Activated CD4-positive, alpha-beta T cell treated with anti-CD3 and anti-CD28 coated beads for 36 hours (primary cell): ENCODE measurements at regions of chr2 and their contacts with region 1.

Region 1: DNA sequence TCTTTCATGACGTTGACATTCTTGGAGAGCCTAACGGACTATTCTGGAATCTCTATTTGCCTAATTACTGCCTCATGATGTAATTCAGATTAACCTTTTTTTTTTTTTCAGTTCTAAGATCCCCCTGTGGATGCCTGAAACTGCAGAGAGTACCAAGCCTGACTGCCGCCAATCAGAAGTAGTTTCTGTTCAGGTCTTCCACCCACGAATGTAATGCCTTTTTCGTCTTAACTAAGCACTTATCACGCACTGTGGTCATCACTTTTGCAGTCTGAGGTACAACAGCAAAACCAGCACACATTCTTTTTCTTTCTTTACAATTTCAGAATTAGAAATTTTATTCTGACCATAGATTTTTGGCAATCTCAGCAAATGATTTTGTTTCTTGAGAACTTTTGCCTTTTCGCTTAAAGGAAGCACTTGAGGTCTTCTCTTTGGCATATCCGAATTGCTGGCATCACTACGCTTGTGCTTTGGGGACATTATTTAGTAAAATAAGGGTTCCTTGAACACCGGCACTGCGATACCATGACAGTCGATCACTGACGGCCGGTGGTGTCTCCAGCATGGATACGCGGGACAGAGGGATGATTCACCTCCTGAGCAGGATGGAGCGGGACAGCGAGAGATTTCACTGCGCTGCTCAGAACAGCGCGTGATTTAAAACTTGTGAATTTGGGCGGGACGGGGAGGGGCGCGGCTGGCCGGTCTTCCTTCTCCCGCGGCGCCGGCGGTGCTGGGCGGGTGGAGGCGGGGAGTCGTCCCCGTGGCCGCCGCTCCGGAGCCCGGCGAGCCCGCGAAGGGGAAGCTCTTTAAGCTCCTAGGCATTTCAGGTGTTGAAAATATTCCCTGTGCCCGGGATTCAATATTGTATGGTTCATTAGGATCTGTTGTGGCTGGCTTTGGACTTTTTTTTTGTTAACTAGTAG is 32.0 kb upstream of the GPR55 start:
- DNase-seq: peak; percentile 64
- ATAC-seq: peak; percentile 81
- H3K4me3 Mint-ChIP-seq: peak overlapping the region; percentile 79
- H3K27ac Mint-ChIP-seq: peak overlapping the region; percentile 95
- H3K4me1 Mint-ChIP-seq: peaks cover 49% of the 10 kb centered on the region
- H3K27me3 Mint-ChIP-seq: peaks cover 47% of the 10 kb centered on the region

Region 2: DNA sequence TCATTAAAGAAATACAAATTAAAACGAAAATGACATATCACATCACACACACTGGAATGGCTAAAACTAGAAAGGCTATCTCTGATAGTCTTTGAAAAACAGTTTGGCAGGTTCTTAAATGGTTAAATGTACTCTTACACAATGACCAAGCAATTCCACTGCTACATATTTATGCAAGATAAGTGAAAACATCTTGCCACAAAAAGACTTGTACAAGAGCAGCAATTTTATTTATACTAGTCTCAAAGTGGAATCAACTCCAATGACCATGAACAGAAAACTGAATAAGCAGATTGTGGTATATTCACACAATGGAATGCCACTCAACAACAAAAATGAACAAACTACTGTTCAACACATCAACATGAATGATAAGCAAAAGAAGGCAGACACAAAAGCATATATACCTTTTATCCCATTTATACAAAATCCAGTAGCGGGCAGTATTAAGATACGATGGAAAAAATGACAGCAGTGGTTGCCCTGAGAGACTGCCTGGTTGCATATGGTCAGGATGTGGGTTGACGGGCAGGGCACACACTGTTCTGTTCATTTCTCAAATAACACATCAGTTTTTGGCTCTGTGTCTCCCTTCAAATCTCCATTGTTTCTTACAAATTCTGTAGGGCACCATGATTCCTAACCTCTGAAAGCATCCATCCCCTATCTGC is 515.7 kb before region 1 on chr2:
- CTCF ChIA-PET with region 1: no interaction called
- POLR2A ChIA-PET with region 1: no interaction called
- intact Hi-C with region 1: loop called in 1 of 2 experiments (anchors 10 kb)
- DNase-seq: peak; percentile 59
- ATAC-seq: peak; percentile 80
- H3K4me3 Mint-ChIP-seq: peak overlapping the region; percentile 40
- H3K27ac Mint-ChIP-seq: peak overlapping the region; percentile 84
- H3K4me1 Mint-ChIP-seq: peaks cover 60% of the 10 kb centered on the region
- H3K27me3 Mint-ChIP-seq: no peaks in the 10 kb centered on the region

Region 3: DNA sequence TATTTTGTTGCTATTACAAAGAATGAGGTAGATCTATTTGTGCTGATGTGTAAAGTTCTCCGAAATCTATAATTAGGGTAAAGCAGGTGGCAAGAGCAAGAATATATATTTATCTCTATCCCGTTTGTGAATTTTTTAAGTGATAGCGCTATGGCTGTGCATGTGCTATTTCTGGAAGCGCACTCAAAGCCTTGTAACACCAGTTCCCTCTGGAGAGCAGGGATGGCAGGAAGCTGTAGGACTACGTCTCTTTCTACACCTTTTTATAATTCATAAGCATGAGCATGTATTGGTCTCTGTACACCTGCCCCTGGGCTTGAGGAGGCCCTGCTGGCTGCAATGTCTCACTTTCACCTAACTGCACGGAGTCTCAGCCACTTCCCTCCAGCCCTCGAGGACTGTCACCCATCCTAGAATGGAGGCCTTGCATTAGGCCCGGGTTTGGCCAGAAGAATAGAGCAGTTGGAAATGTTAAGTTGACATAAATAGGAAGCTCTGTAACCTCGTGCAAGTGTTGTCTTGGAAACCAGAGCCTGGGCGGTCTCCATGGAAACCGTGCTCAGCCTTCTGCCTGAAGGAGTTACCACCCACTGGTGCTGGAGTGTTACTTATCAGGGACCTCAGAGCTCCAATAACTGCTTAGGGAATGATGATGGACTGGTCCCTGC is 71.5 kb before region 1 on chr2:
- CTCF ChIA-PET with region 1: no interaction called
- POLR2A ChIA-PET with region 1: no interaction called
- intact Hi-C with region 1: no loop called
- DNase-seq: no peak
- ATAC-seq: no peak
- H3K4me3 Mint-ChIP-seq: no peak overlapping the region
- H3K27ac Mint-ChIP-seq: no peak overlapping the region
- H3K4me1 Mint-ChIP-seq: peaks cover 13% of the 10 kb centered on the region
- H3K27me3 Mint-ChIP-seq: peaks cover 2% of the 10 kb centered on the region

Region 4: DNA sequence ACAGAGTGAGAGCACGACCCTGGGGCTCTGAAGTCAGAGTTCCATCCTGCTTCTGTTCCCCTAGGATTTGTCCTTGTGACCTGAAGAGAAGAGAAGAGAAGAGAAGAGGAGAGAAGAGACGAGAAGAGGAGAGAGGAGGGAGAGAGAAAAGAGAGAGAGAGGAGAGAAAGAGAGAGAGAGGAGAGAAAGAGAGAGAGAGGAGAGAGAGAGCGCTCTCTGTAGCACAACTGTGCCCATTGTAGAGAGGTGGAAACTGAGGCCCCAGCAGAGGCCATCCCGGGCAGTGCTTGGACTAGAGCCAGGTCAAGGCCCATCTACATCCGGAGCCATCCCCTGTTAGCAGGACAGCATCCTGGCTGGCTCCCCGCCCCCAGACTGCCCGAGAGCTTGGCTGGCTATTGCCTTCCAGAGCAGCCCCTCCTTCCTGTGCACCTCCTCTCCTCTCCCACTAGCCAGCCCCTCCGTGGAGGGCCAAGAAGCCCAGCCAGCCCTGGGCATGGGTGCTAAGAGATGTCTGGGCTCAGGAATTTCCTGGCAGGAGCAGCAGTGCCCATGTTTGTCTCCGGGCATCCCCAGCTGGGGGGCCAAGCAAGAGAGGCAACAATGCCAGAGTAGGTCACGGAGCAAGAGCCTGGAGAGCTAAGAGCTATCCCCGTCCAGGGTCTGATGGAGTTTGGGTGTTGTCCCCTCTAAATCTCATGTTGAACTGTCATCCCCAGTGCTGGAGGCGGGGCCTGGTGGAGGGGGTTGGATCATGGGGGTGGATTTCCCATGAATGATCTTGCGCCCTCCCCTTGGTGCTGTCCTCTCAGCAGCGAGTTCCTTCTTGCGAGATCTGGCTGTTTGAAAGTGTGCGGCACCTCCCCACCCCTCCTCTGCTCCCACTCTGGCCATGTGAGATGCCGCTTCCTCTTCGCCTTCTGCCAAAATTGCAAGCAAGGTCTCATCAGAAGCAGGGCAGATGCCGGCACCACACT is 13.9 kb before region 1 on chr2:
- CTCF ChIA-PET with region 1: interaction called, 3 read pairs
- POLR2A ChIA-PET with region 1: no interaction called
- intact Hi-C with region 1: loop called in 1 of 2 experiments (anchors 1 kb)
- DNase-seq: peak; percentile 78
- ATAC-seq: peak; percentile 78
- H3K4me3 Mint-ChIP-seq: peak overlapping the region; percentile 61
- H3K27ac Mint-ChIP-seq: peak overlapping the region; percentile 75
- H3K4me1 Mint-ChIP-seq: peaks cover 27% of the 10 kb centered on the region
- H3K27me3 Mint-ChIP-seq: peaks cover 4% of the 10 kb centered on the region

Region 5: GRCh38 chr2:230974096-230974913 is 17.2 kb after region 1 on chr2:
- CTCF ChIA-PET with region 1: interaction called, 3 read pairs
- POLR2A ChIA-PET with region 1: interaction called, 4 read pairs
- intact Hi-C with region 1: loop called in 1 of 2 experiments (anchors 1 kb)
- DNase-seq: peak; percentile 86
- ATAC-seq: peak; percentile 92
- H3K4me3 Mint-ChIP-seq: peak overlapping the region; percentile 26
- H3K27ac Mint-ChIP-seq: peak overlapping the region; percentile 91
- H3K4me1 Mint-ChIP-seq: peaks cover 48% of the 10 kb centered on the region
- H3K27me3 Mint-ChIP-seq: peaks cover 2% of the 10 kb centered on the region